PC-9 (cell line): ENCODE measurements at regions of chr4 and their contacts with region 1.

Region 1: GRCh38 chr4:186669159-186669731 is 54.4 kb downstream of the FAT1 start:
- DNase-seq: no peak
- H3K4me3 ChIP-seq: no peak overlapping the region
- H3K27ac ChIP-seq: no peak overlapping the region
- H3K4me1 ChIP-seq: no peaks in the 10 kb centered on the region
- H3K27me3 ChIP-seq: no peaks in the 10 kb centered on the region
- CTCF ChIP-seq: peak; percentile 52

Region 2: GRCh38 chr4:186715077-186715476 is 45.8 kb after region 1 on chr4:
- CTCF ChIA-PET with region 1: interaction called, 13 read pairs
- POLR2A ChIA-PET with region 1: no interaction called
- intact Hi-C with region 1: no loop called
- DNase-seq: no peak
- H3K4me3 ChIP-seq: no peak overlapping the region
- H3K27ac ChIP-seq: no peak overlapping the region
- H3K4me1 ChIP-seq: no peaks in the 10 kb centered on the region
- H3K27me3 ChIP-seq: no peaks in the 10 kb centered on the region
- CTCF ChIP-seq: no peak

Region 3: DNA sequence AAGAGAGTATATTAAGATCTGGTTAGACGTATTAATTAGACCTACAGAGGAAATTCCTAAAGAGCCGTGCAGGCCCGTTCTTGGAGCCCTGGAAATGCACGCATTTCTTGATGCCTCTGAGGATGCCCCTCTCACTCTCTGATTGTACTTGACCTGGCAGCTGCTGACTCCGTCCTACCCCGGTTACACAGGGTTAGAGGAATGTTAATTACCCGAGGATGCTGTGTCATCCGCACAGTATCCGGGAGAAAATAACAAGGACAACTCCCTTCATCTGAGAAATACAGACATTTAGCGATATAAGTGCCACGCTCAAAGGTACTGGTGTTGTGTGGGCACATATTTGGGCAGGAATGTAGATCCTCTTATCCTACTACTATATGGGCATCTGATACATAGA is 459.0 kb after region 1 on chr4:
- CTCF ChIA-PET with region 1: no interaction called
- POLR2A ChIA-PET with region 1: no interaction called
- intact Hi-C with region 1: no loop called
- DNase-seq: no peak
- H3K4me3 ChIP-seq: no peak overlapping the region
- H3K27ac ChIP-seq: no peak overlapping the region
- H3K4me1 ChIP-seq: no peaks in the 10 kb centered on the region
- H3K27me3 ChIP-seq: no peaks in the 10 kb centered on the region
- CTCF ChIP-seq: no peak

Region 4: DNA sequence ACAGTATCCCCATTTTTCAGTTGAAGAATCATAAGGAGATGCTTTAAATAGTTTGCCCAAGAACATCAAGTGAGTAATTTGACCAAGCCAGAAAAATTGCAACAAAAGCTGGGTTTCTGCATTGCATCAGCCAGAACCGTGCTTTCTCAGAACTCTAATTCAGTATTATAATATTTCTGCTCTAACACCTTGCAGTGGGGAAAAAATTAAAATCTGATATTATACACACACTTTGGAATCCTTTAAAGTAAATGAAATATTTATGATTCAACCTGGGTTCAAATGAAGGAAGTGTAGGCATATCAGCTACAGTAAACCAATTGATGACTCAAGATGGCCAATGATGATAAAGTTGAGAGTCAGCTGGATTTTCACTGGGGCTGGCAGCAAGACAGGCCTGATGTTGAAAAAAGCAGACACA is 938.8 kb after region 1 on chr4:
- CTCF ChIA-PET with region 1: interaction called, 19 read pairs
- POLR2A ChIA-PET with region 1: no interaction called
- intact Hi-C with region 1: no loop called
- DNase-seq: peak in 1 of 2 experiments; percentile 8
- H3K4me3 ChIP-seq: no peak overlapping the region
- H3K27ac ChIP-seq: 0 out of 2 replicates have a peak overlapping the region, but pooled peaks have one; percentile 16
- H3K4me1 ChIP-seq: no peaks in the 10 kb centered on the region
- H3K27me3 ChIP-seq: no peaks in the 10 kb centered on the region
- CTCF ChIP-seq: no peak